ENCODE measurements at regions of chr19 and their contacts with region 1.

Region 1: GRCh38 chr19:6674868-6675305 is 4.9 kb upstream of the TNFSF14 start:
- DNase-seq: peak; percentile 97
- ATAC-seq: peak; percentile 61
- H3K4me3 Mint-ChIP-seq: peak overlapping the region; percentile 57
- H3K27ac Mint-ChIP-seq: peak overlapping the region; percentile 93
- H3K4me1 Mint-ChIP-seq: peaks cover 75% of the 10 kb centered on the region
- H3K27me3 Mint-ChIP-seq: no peaks in the 10 kb centered on the region

Region 2: DNA sequence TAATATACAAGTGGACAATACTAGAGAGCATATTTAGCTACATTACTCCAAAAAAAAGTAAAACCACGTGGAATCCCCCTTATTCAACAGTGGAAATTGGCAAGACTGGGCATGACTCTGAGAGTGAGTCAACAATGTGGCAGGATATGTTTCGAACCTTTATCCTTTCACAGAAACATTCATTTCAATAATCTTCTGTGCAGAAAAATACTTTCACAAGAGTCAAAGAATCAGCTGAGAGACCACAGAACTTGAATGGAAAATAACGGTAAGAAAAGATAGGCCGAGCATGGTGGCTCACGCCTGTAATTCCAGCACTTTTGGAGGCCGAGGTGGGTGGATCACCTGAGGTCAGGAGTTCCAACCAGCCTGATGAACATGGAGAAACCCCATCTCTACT is 58.9 kb before region 1 on chr19:
- CTCF ChIA-PET with region 1: no interaction called
- POLR2A ChIA-PET with region 1: no interaction called
- intact Hi-C with region 1: loop called in 1 of 2 experiments (anchors 1 kb)
- DNase-seq: peak; percentile 53
- ATAC-seq: peak; percentile 88
- H3K4me3 Mint-ChIP-seq: no peak overlapping the region
- H3K27ac Mint-ChIP-seq: peak overlapping the region; percentile 29
- H3K4me1 Mint-ChIP-seq: peaks cover 29% of the 10 kb centered on the region
- H3K27me3 Mint-ChIP-seq: peaks cover 32% of the 10 kb centered on the region

Region 3: GRCh38 chr19:6632002-6632621 is 42.8 kb before region 1 on chr19:
- CTCF ChIA-PET with region 1: interaction called, 3 read pairs
- POLR2A ChIA-PET with region 1: interaction called, 4 read pairs
- intact Hi-C with region 1: loop called in 1 of 2 experiments (anchors 5 kb)
- DNase-seq: peak; percentile 87
- ATAC-seq: peak; percentile 87
- H3K4me3 Mint-ChIP-seq: no peak overlapping the region
- H3K27ac Mint-ChIP-seq: no peak overlapping the region
- H3K4me1 Mint-ChIP-seq: peaks cover 28% of the 10 kb centered on the region
- H3K27me3 Mint-ChIP-seq: peaks cover 6% of the 10 kb centered on the region

Region 4: GRCh38 chr19:6639439-6639838 is 35.4 kb before region 1 on chr19:
- CTCF ChIA-PET with region 1: interaction called, 3 read pairs
- POLR2A ChIA-PET with region 1: interaction called, 4 read pairs
- intact Hi-C with region 1: loop called (anchors 2 to 5 kb)
- DNase-seq: peak; percentile 63
- ATAC-seq: peak; percentile 92
- H3K4me3 Mint-ChIP-seq: no peak overlapping the region
- H3K27ac Mint-ChIP-seq: no peak overlapping the region
- H3K4me1 Mint-ChIP-seq: peaks cover 33% of the 10 kb centered on the region
- H3K27me3 Mint-ChIP-seq: no peaks in the 10 kb centered on the region

Region 5: GRCh38 chr19:6654347-6655310 is 20.3 kb before region 1 on chr19:
- CTCF ChIA-PET with region 1: interaction called, 6 read pairs
- POLR2A ChIA-PET with region 1: interaction called, 5 read pairs
- intact Hi-C with region 1: loop called (anchors 1 kb)
- DNase-seq: peak; percentile 80
- ATAC-seq: peak; percentile 80
- H3K4me3 Mint-ChIP-seq: peak overlapping the region; percentile 71
- H3K27ac Mint-ChIP-seq: peak overlapping the region; percentile 96
- H3K4me1 Mint-ChIP-seq: peaks cover 61% of the 10 kb centered on the region
- H3K27me3 Mint-ChIP-seq: no peaks in the 10 kb centered on the region

Region 6: DNA sequence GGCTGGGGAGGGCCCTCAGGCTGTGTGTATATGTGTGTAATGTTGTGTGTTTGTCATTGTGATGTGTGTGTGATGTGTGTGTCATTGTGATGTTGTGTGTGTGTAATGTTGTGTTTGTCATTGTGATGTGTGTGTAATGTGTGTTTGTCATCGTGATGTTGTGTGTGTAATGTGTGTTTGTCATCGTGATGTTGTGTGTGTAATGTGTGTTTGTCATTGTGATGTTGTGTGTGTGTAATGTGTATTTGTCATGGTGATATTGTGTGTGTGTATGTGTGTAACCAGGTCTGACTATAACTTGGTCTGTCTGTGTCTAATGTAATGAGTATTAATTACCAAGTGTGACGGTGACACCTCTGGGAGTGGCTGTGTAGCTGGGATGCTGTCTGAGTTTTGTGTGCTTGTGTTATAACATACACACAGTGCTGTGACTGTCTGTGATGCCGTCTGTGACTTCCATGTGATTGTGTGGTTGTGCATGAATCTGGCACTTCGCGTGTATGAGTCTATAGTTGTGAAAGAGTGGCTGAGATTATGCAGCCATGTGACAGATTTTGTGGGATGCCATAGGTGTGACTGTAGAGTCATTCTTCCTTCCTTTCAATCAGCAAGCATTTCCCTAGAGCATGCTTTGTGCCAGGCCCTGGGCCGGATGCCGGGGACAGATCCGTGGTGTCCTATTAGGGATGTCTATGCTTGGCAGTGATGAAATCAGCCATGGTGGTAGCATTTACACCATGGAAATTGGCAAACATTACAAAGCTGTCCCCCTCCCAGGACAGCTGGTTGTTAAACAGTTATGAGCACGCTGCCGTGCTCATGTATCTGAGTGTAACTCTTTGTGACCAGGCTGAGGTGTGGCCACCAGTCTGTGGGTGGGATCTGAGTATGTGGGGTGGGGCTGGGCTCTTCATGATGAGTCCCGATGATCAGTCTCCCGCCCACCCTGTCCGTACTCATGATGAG is 11.4 kb before region 1 on chr19:
- CTCF ChIA-PET with region 1: interaction called, 6 read pairs
- POLR2A ChIA-PET with region 1: interaction called, 13 read pairs
- intact Hi-C with region 1: loop called (anchors 1 kb)
- DNase-seq: peak; percentile 70
- ATAC-seq: peak; percentile 40
- H3K4me3 Mint-ChIP-seq: no peak overlapping the region
- H3K27ac Mint-ChIP-seq: no peak overlapping the region
- H3K4me1 Mint-ChIP-seq: peaks cover 19% of the 10 kb centered on the region
- H3K27me3 Mint-ChIP-seq: no peaks in the 10 kb centered on the region

Region 7: DNA sequence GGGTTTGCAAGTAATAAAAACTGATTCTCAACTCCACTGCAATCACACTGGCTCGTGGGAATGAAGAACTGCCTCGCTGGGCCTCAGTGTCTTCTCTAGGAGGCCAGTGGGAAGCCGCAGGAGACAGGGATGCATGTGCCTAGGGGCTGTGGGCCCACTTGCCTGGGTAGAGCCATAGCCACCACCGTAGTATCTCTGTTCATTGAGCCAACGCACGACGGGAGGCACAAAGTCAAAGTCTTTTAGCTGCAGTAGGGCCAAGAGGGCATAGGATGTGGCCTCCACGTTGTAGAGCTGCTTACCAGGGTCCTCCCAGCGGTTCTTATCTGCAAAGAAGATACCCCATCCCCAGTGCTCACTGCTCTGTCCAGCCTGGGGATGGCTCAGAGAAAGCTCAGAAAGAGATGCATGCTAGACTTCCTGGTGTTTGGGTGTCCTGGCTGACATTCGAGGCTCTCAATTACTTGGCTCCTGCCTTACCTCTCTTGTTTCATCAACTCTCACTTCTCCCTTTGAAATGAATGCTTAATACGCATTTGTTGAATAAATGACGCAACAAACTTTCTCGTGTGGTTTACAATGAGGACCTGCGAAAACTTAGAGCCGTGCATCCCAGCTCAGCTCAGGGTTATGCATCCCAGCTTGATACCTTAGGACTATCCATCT is 11.2 kb after region 1 on chr19:
- CTCF ChIA-PET with region 1: no interaction called
- POLR2A ChIA-PET with region 1: no interaction called
- intact Hi-C with region 1: no loop called
- DNase-seq: no peak
- ATAC-seq: no peak
- H3K4me3 Mint-ChIP-seq: no peak overlapping the region
- H3K27ac Mint-ChIP-seq: no peak overlapping the region
- H3K4me1 Mint-ChIP-seq: peaks cover 18% of the 10 kb centered on the region
- H3K27me3 Mint-ChIP-seq: peaks cover 3% of the 10 kb centered on the region

Region 8: GRCh38 chr19:6801485-6802086 is 126.7 kb after region 1 on chr19:
- CTCF ChIA-PET with region 1: no interaction called
- POLR2A ChIA-PET with region 1: interaction called, 3 read pairs
- intact Hi-C with region 1: loop called in 1 of 2 experiments (anchors 2 kb)
- DNase-seq: peak; percentile 90
- ATAC-seq: peak; percentile 75
- H3K4me3 Mint-ChIP-seq: peak overlapping the region; percentile 82
- H3K27ac Mint-ChIP-seq: peak overlapping the region; percentile 98
- H3K4me1 Mint-ChIP-seq: peaks cover 72% of the 10 kb centered on the region
- H3K27me3 Mint-ChIP-seq: no peaks in the 10 kb centered on the region

Measured in activated CD4-positive, alpha-beta T cell treated with anti-CD3 and anti-CD28 coated beads for 36 hours (primary cell).